ENCODE measurements at regions of chr6 and their contacts with region 1.

Region 1: GRCh38 chr6:37324131-37325033 is 29.4 kb upstream of the RNF8 start:
- DNase-seq: peak; percentile 47
- H3K4me3 Mint-ChIP-seq: no peak overlapping the region
- H3K27ac Mint-ChIP-seq: no peak overlapping the region
- H3K4me1 Mint-ChIP-seq: peaks cover 11% of the 10 kb centered on the region
- H3K27me3 Mint-ChIP-seq: no peaks in the 10 kb centered on the region
- CTCF ChIP-seq: no peak

Region 2: GRCh38 chr6:36851149-36851614 is 473.2 kb before region 1 on chr6:
- CTCF ChIA-PET with region 1: no interaction called
- POLR2A ChIA-PET with region 1: no interaction called
- intact Hi-C with region 1: no loop called
- DNase-seq: peak; percentile 74
- H3K4me3 Mint-ChIP-seq: no peak overlapping the region
- H3K27ac Mint-ChIP-seq: no peak overlapping the region
- H3K4me1 Mint-ChIP-seq: peaks cover 17% of the 10 kb centered on the region
- H3K27me3 Mint-ChIP-seq: no peaks in the 10 kb centered on the region
- CTCF ChIP-seq: peak; percentile 83

Region 3: DNA sequence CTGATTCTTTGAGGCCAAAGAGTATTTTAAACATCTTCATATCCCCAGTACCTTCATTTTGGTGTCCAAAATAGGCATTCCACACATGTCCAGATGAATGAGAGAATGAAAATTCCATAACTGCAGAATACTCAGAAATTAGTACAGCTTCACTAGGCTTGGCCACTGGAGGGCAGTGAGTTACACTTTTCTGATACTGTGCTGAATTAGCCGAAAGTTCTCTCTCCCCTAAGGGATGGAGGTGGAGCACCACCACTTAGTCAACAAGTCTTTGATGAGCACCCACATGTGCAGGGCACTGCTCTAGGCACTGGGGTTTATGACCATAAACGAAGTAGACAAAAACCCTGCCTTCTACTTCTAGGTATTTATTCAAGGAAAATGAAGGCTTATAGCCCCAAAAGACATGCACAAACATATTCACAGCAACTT is 20.4 kb before region 1 on chr6:
- CTCF ChIA-PET with region 1: interaction called, 62 read pairs
- POLR2A ChIA-PET with region 1: interaction called, 3 read pairs
- intact Hi-C with region 1: no loop called
- DNase-seq: peak; percentile 52
- H3K4me3 Mint-ChIP-seq: no peak overlapping the region
- H3K27ac Mint-ChIP-seq: peak overlapping the region; percentile 57
- H3K4me1 Mint-ChIP-seq: no peaks in the 10 kb centered on the region
- H3K27me3 Mint-ChIP-seq: no peaks in the 10 kb centered on the region
- CTCF ChIP-seq: peak; percentile 30

Region 4: DNA sequence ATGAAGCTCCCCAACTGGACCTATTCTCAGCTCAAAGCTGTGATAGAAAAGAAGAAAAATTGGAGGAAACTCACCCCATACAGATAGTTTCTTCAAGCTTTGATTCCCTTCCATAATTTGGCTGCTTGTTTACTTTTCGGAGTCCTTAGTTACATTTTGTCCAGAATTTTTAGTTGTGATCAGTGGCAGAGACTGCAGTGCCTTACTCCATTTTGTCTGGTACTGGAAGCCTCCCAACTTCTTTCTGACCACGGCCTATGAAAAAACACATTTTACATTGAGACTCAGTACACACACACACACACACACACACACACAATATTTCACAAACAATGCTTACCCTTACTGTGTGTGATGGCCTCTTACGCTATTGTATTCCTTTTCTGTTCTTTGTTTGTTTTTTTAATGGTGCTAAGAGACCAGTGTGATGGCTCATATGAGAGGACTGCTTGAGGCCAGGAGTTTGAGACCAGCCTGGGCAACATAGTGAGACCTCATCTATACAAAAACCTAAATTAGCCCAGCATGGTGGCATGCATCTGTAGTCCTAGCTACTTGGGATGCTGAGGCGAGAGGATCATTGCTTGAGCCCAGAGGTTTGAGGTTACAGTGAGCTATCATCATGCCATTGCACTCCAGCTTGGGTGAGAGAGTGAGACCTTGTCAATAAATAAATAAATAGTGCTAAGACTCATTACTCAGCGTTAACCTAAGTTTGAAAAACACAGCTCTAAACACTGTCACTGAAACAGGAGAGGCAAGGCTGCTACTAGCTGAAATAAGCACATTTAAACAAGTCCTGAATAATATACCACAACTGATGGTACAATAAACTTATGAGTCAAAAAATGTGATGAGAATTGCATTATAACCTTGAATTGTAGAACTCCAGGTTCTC is 15.6 kb after region 1 on chr6:
- CTCF ChIA-PET with region 1: interaction called, 11 read pairs
- POLR2A ChIA-PET with region 1: no interaction called
- intact Hi-C with region 1: no loop called
- DNase-seq: no peak
- H3K4me3 Mint-ChIP-seq: no peak overlapping the region
- H3K27ac Mint-ChIP-seq: no peak overlapping the region
- H3K4me1 Mint-ChIP-seq: no peaks in the 10 kb centered on the region
- H3K27me3 Mint-ChIP-seq: peaks cover 16% of the 10 kb centered on the region
- CTCF ChIP-seq: no peak

Region 5: GRCh38 chr6:37371154-37372083 is 47.0 kb after region 1 on chr6:
- CTCF ChIA-PET with region 1: interaction called, 10 read pairs
- POLR2A ChIA-PET with region 1: no interaction called
- intact Hi-C with region 1: no loop called
- DNase-seq: no peak
- H3K4me3 Mint-ChIP-seq: no peak overlapping the region
- H3K27ac Mint-ChIP-seq: no peak overlapping the region
- H3K4me1 Mint-ChIP-seq: peaks cover 5% of the 10 kb centered on the region
- H3K27me3 Mint-ChIP-seq: no peaks in the 10 kb centered on the region
- CTCF ChIP-seq: no peak